CD14-positive monocyte (primary cell): ENCODE measurements at regions of chr16 and their contacts with region 1.

Region 1: DNA sequence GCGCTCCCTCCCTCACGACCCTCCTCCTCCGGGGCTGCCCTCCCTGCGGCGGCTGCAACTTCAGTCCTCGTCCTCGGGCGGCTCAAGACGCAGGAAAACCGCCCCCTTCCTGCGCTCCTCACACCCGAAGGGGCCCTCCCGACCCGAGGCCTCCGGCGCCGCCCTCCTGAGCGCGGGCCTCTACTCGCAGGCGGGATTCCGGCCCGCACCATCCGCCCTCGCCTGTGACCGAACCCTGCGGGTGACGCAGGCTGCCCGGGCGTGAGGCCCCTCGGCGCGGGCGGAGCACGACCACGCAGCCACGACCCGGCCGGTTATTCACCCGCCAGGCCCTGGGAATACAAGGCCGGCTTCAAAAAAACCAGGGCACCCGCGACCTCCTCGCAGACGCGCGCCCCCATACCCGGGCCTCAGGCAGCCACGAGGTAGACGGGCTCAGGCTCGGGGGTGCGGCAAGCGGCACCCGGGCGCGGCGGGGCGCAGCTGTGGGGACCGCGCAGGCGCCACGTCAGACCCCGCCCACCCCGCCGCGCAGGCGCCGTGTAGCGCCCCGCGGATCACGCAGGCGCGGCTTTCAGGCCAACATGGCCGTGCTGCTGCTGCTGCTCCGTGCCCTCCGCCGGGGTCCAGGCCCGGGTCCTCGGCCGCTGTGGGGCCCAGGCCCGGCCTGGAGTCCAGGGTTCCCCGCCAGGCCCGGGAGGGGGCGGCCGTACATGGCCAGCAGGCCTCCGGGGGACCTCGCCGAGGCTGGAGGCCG is at the start of gene SPG7:
- DNase-seq: peak; percentile 78 to 85 (median 84)
- H3K4me3 ChIP-seq: peak within 1 kb of the TSS; percentile 61 to 88 (median 86)
- H3K4me3 Mint-ChIP-seq: peak within 1 kb of the TSS; percentile 80 to 85
- H3K27ac ChIP-seq: peak within 1 kb of the TSS; percentile 66 to 90
- H3K27ac Mint-ChIP-seq: peak within 1 kb of the TSS; percentile 63 to 91 (median 89)
- H3K4me1 ChIP-seq: peaks cover 38 to 49% of the 10 kb centered on the region in 2 donors
- H3K4me1 Mint-ChIP-seq: peaks cover 38% of the 10 kb centered on the region
- H3K27me3 ChIP-seq: no peaks in the 10 kb centered on the region
- H3K27me3 Mint-ChIP-seq: no peaks in the 10 kb centered on the region
- CTCF ChIP-seq: no peak
- polyA plus RNA-seq, gene SPG7: 30.3 to 120 (median 34.4) TPM

Region 2: DNA sequence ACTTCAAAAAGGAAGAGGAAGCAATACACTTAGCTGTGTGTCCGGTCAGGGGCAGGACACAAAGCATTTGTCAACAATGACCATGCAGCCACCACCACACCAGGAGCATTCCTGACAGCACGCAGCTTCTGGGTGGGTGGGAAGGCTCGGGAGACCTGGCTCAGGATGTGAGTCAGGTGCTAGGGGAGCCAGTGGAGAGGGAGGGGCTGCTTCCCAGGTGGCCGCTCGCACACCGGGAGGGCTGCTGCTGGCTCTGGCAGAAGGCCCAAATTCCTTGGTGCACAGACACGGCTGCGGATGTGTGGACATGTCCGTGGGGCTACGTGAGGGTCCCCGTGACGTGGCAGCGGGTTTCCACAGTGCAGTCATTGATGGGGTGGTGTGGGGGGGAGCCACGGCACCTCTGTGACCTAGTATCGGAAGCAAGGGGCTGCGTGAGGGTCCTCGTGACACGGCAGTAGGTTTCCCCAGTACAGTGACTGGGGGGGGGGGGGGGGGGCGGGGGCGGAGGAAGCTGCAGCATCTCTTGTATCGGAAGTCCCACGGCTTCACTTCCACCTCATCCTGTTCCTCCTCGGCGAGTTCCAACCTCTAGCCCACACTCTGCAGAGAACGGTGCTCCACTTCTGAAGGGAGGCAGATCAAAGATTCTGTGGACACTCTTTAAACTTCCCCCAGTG is 177.7 kb before region 1 on chr16:
- intact Hi-C with region 1: loop called in 1 of 2 experiments (anchors 5 kb)
- DNase-seq: peak; percentile 20 to 57 (median 37)
- H3K4me3 ChIP-seq: no peak overlapping the region
- H3K4me3 Mint-ChIP-seq: peak overlapping the region in 1 of 2 donors; percentile 64
- H3K27ac ChIP-seq: peak overlapping the region; percentile 61 to 79
- H3K27ac Mint-ChIP-seq: peak overlapping the region in 6 of 7 donors; percentile 66 to 87 (median 79)
- H3K4me1 ChIP-seq: peaks cover 38 to 59% of the 10 kb centered on the region in 2 donors
- H3K4me1 Mint-ChIP-seq: peaks cover 60% of the 10 kb centered on the region
- H3K27me3 ChIP-seq: no peaks in the 10 kb centered on the region
- H3K27me3 Mint-ChIP-seq: no peaks in the 10 kb centered on the region
- CTCF ChIP-seq: no peak

Region 3: DNA sequence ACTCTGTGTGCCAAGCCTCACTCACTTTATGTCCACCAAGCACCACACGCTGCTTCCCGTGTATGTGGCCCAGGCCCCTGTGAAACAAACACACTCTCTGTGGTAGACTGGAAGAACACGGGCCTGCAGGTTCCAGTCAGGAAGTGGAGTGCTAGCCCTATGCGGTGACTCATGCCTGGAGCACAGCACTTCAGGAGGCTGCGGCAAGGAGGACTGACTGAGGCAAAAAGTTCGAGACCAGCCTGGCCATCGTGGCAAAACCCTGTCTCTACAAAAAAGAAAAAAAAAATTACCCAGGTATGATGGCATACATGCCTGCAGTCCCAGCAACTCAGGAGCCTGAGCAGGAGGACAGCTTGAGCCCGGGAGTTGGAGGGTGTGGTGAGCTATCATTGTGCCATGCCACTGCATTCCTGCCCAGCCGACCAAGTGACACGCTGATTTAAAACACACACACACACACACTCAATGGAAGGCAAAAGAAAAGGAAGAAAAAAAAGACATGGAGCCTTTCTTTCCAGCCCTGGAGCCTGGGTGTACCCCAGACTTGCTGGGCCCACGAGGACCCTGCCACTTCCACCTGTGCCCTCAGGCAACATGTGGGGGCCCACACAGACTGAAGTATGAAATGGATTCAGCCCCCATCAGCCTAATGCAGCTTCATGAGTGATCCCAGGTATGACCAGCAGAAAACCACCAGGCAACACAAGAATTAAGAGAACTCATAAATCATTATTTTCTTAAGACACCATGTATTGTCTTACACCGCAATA is 144.2 kb before region 1 on chr16:
- intact Hi-C with region 1: loop called in 1 of 2 experiments (anchors 5 kb)
- DNase-seq: peak; percentile 47 to 79 (median 66)
- H3K4me3 ChIP-seq: no peak overlapping the region
- H3K4me3 Mint-ChIP-seq: no peak overlapping the region
- H3K27ac ChIP-seq: peak overlapping the region in 1 of 2 donors; percentile 74
- H3K27ac Mint-ChIP-seq: peak overlapping the region; percentile 73 to 94 (median 79)
- H3K4me1 ChIP-seq: peaks cover 61 to 70% of the 10 kb centered on the region in 2 donors
- H3K4me1 Mint-ChIP-seq: peaks cover 79% of the 10 kb centered on the region
- H3K27me3 ChIP-seq: no peaks in the 10 kb centered on the region
- H3K27me3 Mint-ChIP-seq: no peaks in the 10 kb centered on the region
- CTCF ChIP-seq: no peak

Region 4: GRCh38 chr16:89436366-89436765 is 71.6 kb before region 1 on chr16:
- intact Hi-C with region 1: loop called in 1 of 2 experiments (anchors 5 kb)
- DNase-seq: peak; percentile 68 to 74 (median 74)
- H3K4me3 ChIP-seq: peak overlapping the region in 1 of 3 experiments; percentile 67
- H3K4me3 Mint-ChIP-seq: peak overlapping the region in 1 of 2 donors; percentile 81
- H3K27ac ChIP-seq: peak overlapping the region; percentile 83 to 86
- H3K27ac Mint-ChIP-seq: peak overlapping the region; percentile 95 to 98 (median 97)
- H3K4me1 ChIP-seq: peaks cover 47 to 59% of the 10 kb centered on the region in 2 donors
- H3K4me1 Mint-ChIP-seq: peaks cover 69% of the 10 kb centered on the region
- H3K27me3 ChIP-seq: no peaks in the 10 kb centered on the region
- H3K27me3 Mint-ChIP-seq: peaks cover 0 to 8% (median 0%) of the 10 kb centered on the region in 3 donors
- CTCF ChIP-seq: no peak